ENCODE measurements at regions of chr19 and their contacts with region 1.

Region 1: DNA sequence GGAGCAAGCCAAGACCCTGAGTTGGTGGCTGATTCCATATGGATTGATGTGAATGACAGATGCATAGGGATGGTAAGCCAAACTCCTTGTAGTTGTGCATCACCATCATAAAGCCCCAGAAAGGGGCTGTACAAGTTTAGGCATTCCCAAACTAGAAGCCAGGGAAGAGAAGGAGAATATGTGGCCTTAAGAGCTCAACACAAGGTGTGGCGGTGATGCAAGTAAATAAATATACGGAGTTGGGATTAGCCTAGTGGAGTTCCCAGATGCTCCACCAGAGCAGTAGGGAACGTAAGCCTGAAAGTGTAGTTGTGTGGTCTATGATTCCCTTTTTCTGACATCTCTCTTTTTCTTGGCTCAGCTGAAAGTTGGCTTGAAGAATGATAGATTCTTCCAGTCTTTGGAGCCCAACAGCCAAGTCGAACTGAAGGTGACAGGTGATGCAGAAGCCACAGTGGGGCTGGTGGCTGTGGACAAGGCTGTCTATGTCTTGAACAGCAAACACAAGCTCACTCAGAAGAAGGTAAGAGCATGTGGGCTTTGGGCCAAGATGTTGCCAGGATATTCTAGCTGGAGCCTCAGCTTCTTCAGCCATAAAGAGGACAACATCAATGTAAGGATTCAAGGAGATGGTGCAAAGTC is 30.1 kb downstream of the RDH8 start:
- DNase-seq: no peak
- ATAC-seq: no peak
- H3K4me3 ChIP-seq: no peak overlapping the region
- H3K27ac ChIP-seq: no peak overlapping the region
- H3K4me1 ChIP-seq: no peaks in the 10 kb centered on the region
- H3K27me3 ChIP-seq: peaks cover 0 to 16% (median 0%) of the 10 kb centered on the region in 9 donors
- CTCF ChIP-seq: no peak
- POLR2A ChIP-seq: no peak

Region 2: GRCh38 chr19:9923440-9923839 is 120.0 kb before region 1 on chr19:
- intact Hi-C with region 1: no loop called
- DNase-seq: no peak
- ATAC-seq: no peak
- H3K4me3 ChIP-seq: no peak overlapping the region
- H3K27ac ChIP-seq: no peak overlapping the region
- H3K4me1 ChIP-seq: no peaks in the 10 kb centered on the region
- H3K27me3 ChIP-seq: peaks cover 0 to 4% (median 0%) of the 10 kb centered on the region in 9 donors
- CTCF ChIP-seq: no peak
- POLR2A ChIP-seq: no peak

Region 3: GRCh38 chr19:10085641-10086590 is 42.5 kb after region 1 on chr19 and contains the start of gene SHFL:
- intact Hi-C with region 1: loop called in 1 of 10 experiments (anchors 2 kb)
- DNase-seq: peak; percentile 70 to 89 (median 79)
- ATAC-seq: peak; percentile 81 to 93 (median 92)
- H3K4me3 ChIP-seq: peak within 1 kb of the TSS; percentile 27 to 100 (median 86)
- H3K27ac ChIP-seq: peak within 1 kb of the TSS; percentile 78 to 97 (median 92)
- H3K4me1 ChIP-seq: peaks cover 0 to 16% (median 3%) of the 10 kb centered on the region in 12 donors
- H3K27me3 ChIP-seq: no peaks in the 10 kb centered on the region
- CTCF ChIP-seq: peak in 1 of 12 donors; percentile 6
- POLR2A ChIP-seq: peak in 1 of 2 donors; percentile 51
- total RNA-seq, gene SHFL: 6.3 to 29.0 (median 8.7) TPM

Measured in heart left ventricle (tissue), 16 donors.